ENCODE measurements at regions of chr2 and their contacts with region 1.

Region 1: DNA sequence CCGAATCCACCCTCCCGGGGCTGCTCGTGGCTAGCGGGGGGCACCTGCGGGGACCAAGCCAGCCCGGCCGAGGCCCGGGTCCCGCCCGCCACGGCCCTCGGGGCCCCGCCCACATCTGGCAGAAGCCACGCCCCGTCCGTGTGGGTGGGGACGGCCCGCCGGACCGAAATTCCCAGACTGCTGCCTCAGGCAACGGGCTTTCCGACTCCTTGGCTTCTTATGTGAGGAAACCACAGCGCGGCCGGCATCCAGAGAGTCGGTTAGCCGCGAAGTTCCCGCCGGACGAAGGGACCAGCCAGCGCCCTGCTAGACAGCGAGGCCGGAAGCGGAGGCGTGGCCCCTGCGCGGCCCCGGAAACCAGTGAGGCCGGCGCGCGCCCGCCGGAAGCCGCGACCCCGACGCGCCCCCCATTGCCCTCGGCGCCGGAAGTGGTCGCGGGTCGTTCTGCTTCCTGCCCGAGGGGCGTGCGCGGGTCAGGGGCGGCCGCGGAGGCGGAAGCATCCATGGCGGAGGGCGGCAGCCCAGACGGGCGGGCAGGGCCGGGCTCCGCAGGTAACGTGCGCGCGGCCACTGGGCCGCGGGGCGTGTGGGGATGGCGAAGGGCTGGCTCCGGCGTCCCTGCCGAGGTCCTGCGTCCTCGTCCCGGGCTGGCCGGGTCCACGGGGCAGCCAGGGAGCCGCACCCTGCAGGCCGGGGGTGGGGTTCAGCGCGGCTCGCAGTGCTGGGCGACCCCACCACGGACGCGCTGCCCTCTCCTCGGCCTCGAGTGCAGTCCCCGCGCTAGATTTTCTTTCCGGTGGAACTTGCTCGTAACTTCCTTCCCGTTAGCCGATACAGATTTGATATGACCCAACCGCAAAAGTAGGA is at the start of gene ASB1:
- DNase-seq: peak; percentile 86
- H3K4me3 Mint-ChIP-seq: peak within 1 kb of the TSS; percentile 90
- H3K27ac Mint-ChIP-seq: peak within 1 kb of the TSS; percentile 92
- H3K4me1 Mint-ChIP-seq: peaks cover 38% of the 10 kb centered on the region
- H3K27me3 Mint-ChIP-seq: no peaks in the 10 kb centered on the region
- total RNA-seq, gene ASB1: 34.6 to 38.8 TPM

Region 2: GRCh38 chr2:238320246-238320647 is 106.6 kb before region 1 on chr2 and contains the start of gene TRAF3IP1:
- CTCF ChIA-PET with region 1: no interaction called
- POLR2A ChIA-PET with region 1: no interaction called
- intact Hi-C with region 1: no loop called
- DNase-seq: peak; percentile 89
- H3K4me3 Mint-ChIP-seq: peak within 1 kb of the TSS; percentile 71
- H3K27ac Mint-ChIP-seq: no peak within 1 kb of the TSS
- H3K4me1 Mint-ChIP-seq: peaks cover 16% of the 10 kb centered on the region
- H3K27me3 Mint-ChIP-seq: peaks cover 3% of the 10 kb centered on the region
- total RNA-seq, gene TRAF3IP1: 8.0 to 9.3 TPM

Region 3: GRCh38 chr2:238379096-238379810 is 47.5 kb before region 1 on chr2:
- CTCF ChIA-PET with region 1: no interaction called
- POLR2A ChIA-PET with region 1: no interaction called
- intact Hi-C with region 1: loop called (anchors 5 kb)
- DNase-seq: peak; percentile 61
- H3K4me3 Mint-ChIP-seq: no peak overlapping the region
- H3K27ac Mint-ChIP-seq: no peak overlapping the region
- H3K4me1 Mint-ChIP-seq: peaks cover 14% of the 10 kb centered on the region
- H3K27me3 Mint-ChIP-seq: no peaks in the 10 kb centered on the region

Region 4: GRCh38 chr2:238438856-238439849 is 12.4 kb after region 1 on chr2:
- CTCF ChIA-PET with region 1: no interaction called
- POLR2A ChIA-PET with region 1: interaction called, 13 read pairs
- intact Hi-C with region 1: loop called (anchors 1 kb)
- DNase-seq: peak; percentile 89
- H3K4me3 Mint-ChIP-seq: peak overlapping the region; percentile 56
- H3K27ac Mint-ChIP-seq: peak overlapping the region; percentile 53
- H3K4me1 Mint-ChIP-seq: peaks cover 47% of the 10 kb centered on the region
- H3K27me3 Mint-ChIP-seq: no peaks in the 10 kb centered on the region